MCF 10A (cell line): ENCODE measurements at regions of chr17 and their contacts with region 1.

Region 1: DNA sequence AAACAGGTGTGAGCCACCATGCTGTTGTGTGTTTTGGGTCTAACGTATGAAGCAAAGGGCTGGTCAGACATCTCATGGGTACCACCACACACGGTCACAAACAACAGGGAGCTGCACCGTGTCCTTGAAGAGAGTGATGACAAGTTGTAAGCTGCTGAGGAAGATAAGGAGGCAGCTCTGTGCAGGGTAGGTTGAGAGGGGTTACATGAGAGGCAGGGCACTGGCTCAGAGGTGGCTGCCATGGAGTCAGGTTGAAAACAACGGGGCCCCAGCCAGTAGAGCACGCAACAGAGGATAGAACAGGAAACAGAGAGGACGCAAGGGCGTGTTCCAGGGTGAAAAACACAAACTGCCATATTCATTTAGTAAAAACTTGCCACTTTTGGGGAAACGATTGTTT is 52.2 kb downstream of the TRARG1 start:
- DNase-seq: no peak
- H3K4me3 Mint-ChIP-seq: no peak overlapping the region
- H3K27ac Mint-ChIP-seq: no peak overlapping the region
- H3K4me1 Mint-ChIP-seq: no peaks in the 10 kb centered on the region
- H3K27me3 Mint-ChIP-seq: no peaks in the 10 kb centered on the region
- CTCF ChIP-seq: no peak

Region 2: DNA sequence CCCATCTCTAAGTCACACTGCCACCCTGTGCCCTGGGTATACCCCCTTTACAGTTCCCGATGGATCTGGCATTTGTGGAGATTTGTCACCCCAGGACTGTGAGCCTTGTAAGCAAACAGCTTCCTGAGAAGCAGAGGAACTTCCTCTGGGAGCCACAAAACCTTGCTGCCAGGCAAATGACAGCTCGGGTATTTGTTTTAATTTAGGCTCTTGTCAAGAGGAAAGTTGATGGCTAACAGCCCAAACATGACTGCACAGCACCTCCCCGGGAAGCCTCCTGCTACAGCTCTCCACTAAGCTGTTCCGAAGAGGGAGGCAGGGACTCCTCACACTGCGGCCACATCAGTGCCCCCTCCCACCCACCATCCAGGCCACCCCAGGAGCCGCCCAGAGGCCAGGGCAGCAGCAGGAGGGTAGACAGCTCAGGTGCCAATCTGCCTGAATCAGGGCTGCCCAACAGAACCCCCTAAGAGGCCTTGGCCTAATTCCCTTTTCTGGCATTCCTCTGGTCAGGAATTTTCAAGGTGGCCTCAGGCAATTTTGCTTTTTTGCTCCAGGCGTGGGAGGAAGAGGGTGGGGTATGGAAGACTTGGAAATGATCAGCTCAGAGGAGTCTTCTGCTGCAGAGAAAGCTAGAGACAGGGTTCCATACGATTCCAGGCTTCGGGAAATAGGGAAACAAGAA is 154.6 kb before region 1 on chr17:
- CTCF ChIA-PET with region 1: no interaction called
- POLR2A ChIA-PET with region 1: no interaction called
- intact Hi-C with region 1: no loop called
- DNase-seq: no peak
- H3K4me3 Mint-ChIP-seq: no peak overlapping the region
- H3K27ac Mint-ChIP-seq: no peak overlapping the region
- H3K4me1 Mint-ChIP-seq: no peaks in the 10 kb centered on the region
- H3K27me3 Mint-ChIP-seq: no peaks in the 10 kb centered on the region
- CTCF ChIP-seq: no peak

Region 3: DNA sequence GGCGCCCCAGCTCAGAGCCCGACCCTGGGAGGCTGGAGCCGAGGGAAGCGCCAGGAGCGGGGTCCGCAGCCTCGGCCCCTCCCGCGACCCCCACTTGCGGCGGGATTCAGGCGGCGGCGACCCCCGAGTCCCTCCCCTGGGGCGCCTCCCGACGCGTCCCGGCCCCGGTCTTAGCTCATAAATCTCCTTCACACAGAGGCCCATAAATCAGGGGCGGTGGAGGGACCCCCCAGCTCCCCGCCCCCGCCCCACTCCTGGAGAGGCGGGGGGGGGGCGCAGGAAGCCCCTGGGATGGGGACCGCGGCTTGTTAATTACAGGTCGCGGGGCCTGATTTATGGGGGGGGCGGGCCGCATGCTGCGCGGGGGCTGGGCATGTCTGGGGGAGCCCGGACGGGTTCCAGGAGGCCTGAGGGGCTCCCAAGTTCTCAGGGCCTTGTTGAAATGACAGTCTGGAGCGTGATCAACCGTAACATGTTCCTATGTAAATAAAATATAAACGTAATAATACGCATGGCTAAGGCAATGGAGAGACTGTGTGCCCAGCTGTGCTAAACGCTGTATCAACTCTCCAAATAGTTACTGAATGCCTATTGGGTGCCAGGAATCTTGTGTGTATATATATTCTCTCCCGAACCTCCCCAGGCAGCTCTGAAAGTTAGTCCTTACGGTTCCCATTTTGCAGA is 71.5 kb before region 1 on chr17:
- CTCF ChIA-PET with region 1: interaction called, 3 read pairs
- POLR2A ChIA-PET with region 1: no interaction called
- intact Hi-C with region 1: loop called (anchors 1 kb)
- DNase-seq: no peak
- H3K4me3 Mint-ChIP-seq: peak overlapping the region; percentile 72
- H3K27ac Mint-ChIP-seq: no peak overlapping the region
- H3K4me1 Mint-ChIP-seq: no peaks in the 10 kb centered on the region
- H3K27me3 Mint-ChIP-seq: no peaks in the 10 kb centered on the region
- CTCF ChIP-seq: no peak

Region 4: GRCh38 chr17:1275962-1276736 is 55.6 kb before region 1 on chr17:
- CTCF ChIA-PET with region 1: interaction called, 5 read pairs
- POLR2A ChIA-PET with region 1: no interaction called
- intact Hi-C with region 1: loop called (anchors 2 kb)
- DNase-seq: peak; percentile 58
- H3K4me3 Mint-ChIP-seq: no peak overlapping the region
- H3K27ac Mint-ChIP-seq: no peak overlapping the region
- H3K4me1 Mint-ChIP-seq: no peaks in the 10 kb centered on the region
- H3K27me3 Mint-ChIP-seq: no peaks in the 10 kb centered on the region
- CTCF ChIP-seq: peak; percentile 82

Region 5: DNA sequence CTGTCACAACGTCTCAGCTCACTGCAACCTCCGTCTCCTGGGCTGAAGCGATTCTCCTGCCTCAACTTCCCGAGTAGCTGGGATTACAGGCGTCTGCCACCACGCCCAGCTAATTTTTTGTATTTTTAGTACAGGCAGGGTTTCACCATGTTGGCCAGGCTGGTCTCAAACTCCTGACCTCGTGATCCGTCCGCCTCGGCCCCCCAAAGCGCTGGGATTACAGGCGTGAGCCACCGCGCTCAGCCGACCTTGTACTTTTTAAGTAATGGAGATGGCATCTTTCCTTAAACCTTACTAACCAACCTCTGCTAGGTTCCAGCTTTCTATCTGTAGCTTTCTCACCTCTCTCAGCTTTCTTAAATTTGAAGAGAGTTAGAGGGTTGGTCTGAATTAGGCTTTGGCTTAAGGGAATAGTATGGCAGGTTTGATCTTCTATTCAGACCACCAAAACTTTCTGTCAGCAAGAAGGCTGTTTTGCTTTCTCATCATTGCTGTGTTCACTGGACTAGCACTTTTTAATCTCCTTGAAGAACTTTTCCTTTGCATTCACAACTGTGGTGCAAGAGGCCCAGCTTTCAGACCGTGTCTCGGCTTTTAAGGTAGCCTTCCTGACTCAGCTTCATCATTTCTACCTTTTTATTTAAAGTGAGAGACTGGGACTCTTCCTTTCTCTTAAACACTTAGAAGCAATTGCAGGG is 40.3 kb after region 1 on chr17:
- CTCF ChIA-PET with region 1: no interaction called
- POLR2A ChIA-PET with region 1: no interaction called
- intact Hi-C with region 1: no loop called
- DNase-seq: no peak
- H3K4me3 Mint-ChIP-seq: no peak overlapping the region
- H3K27ac Mint-ChIP-seq: no peak overlapping the region
- H3K4me1 Mint-ChIP-seq: peaks cover 29% of the 10 kb centered on the region
- H3K27me3 Mint-ChIP-seq: no peaks in the 10 kb centered on the region
- CTCF ChIP-seq: no peak